RWPE1 (cell line): ENCODE measurements at regions of chr6 and their contacts with region 1.

Region 1: GRCh38 chr6:99151634-99152344 is 197.7 kb downstream of the FAXC start:
- DNase-seq: peak; percentile 33
- H3K27ac ChIP-seq: no peak overlapping the region
- CTCF ChIP-seq: peak; percentile 44; the same call in 1 of the 2 replicates

Region 2: GRCh38 chr6:99138445-99138844 is 13.3 kb before region 1 on chr6:
- CTCF ChIA-PET with region 1: no interaction called
- POLR2A ChIA-PET with region 1: no interaction called
- DNase-seq: no peak
- H3K27ac ChIP-seq: no peak overlapping the region
- CTCF ChIP-seq: no peak

Region 3: DNA sequence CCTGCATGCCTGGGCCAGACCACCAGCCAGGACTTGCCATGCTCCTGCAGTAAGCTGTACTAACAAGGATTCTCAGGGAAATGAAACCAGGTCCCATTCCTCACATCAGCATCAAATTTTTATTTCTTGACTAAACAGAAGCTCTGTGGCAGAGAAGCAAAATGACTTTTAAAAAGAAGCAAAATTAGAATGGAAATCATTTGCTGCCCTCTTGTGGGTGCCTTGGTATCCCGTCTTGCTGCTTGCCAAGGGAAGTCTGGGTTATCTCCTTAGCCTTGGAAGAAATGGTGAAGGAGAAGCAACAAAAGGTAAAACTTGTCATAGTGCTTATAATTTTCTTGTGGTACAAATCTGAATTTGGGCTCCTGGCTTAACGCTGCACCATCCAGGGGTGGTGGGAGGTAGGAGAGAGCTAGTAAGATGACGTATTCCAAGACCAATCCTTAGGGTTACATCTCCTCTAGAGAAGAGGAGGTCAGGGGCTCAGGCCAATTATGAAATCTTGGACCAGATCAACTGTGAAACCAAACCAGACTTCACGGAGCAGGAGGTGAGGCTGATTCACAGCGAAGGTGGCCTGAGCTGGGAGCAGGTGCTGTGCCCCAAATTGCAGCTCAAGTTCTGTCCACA is 90.2 kb after region 1 on chr6:
- CTCF ChIA-PET with region 1: interaction called, 29 read pairs
- POLR2A ChIA-PET with region 1: no interaction called
- DNase-seq: peak; percentile 20
- H3K27ac ChIP-seq: no peak overlapping the region
- CTCF ChIP-seq: peak; percentile 26